Activated CD4-positive, alpha-beta T cell treated with anti-CD3 and anti-CD28 coated beads for 36 hours (primary cell): ENCODE measurements at regions of chr5 and their contacts with region 1.

Region 1: GRCh38 chr5:66151030-66151429 is 6.9 kb downstream of the SREK1 start:
- DNase-seq: peak; percentile 50
- ATAC-seq: peak; percentile 87
- H3K4me3 Mint-ChIP-seq: no peak overlapping the region
- H3K27ac Mint-ChIP-seq: peak overlapping the region; percentile 75
- H3K4me1 Mint-ChIP-seq: peaks cover 49% of the 10 kb centered on the region
- H3K27me3 Mint-ChIP-seq: no peaks in the 10 kb centered on the region

Region 2: GRCh38 chr5:66255714-66256113 is 104.7 kb after region 1 on chr5:
- CTCF ChIA-PET with region 1: no interaction called
- POLR2A ChIA-PET with region 1: no interaction called
- intact Hi-C with region 1: no loop called
- DNase-seq: no peak
- ATAC-seq: no peak
- H3K4me3 Mint-ChIP-seq: no peak overlapping the region
- H3K27ac Mint-ChIP-seq: no peak overlapping the region
- H3K4me1 Mint-ChIP-seq: no peaks in the 10 kb centered on the region
- H3K27me3 Mint-ChIP-seq: no peaks in the 10 kb centered on the region

Region 3: GRCh38 chr5:67021521-67021920 is 870.5 kb after region 1 on chr5:
- CTCF ChIA-PET with region 1: no interaction called
- POLR2A ChIA-PET with region 1: no interaction called
- intact Hi-C with region 1: loop called in 1 of 2 experiments (anchors 10 kb)
- DNase-seq: no peak
- ATAC-seq: peak; percentile 97
- H3K4me3 Mint-ChIP-seq: no peak overlapping the region
- H3K27ac Mint-ChIP-seq: no peak overlapping the region
- H3K4me1 Mint-ChIP-seq: peaks cover 55% of the 10 kb centered on the region
- H3K27me3 Mint-ChIP-seq: no peaks in the 10 kb centered on the region